CD4-positive, alpha-beta memory T cell (primary cell): ENCODE measurements at regions of chr19 and their contacts with region 1.

Region 1: DNA sequence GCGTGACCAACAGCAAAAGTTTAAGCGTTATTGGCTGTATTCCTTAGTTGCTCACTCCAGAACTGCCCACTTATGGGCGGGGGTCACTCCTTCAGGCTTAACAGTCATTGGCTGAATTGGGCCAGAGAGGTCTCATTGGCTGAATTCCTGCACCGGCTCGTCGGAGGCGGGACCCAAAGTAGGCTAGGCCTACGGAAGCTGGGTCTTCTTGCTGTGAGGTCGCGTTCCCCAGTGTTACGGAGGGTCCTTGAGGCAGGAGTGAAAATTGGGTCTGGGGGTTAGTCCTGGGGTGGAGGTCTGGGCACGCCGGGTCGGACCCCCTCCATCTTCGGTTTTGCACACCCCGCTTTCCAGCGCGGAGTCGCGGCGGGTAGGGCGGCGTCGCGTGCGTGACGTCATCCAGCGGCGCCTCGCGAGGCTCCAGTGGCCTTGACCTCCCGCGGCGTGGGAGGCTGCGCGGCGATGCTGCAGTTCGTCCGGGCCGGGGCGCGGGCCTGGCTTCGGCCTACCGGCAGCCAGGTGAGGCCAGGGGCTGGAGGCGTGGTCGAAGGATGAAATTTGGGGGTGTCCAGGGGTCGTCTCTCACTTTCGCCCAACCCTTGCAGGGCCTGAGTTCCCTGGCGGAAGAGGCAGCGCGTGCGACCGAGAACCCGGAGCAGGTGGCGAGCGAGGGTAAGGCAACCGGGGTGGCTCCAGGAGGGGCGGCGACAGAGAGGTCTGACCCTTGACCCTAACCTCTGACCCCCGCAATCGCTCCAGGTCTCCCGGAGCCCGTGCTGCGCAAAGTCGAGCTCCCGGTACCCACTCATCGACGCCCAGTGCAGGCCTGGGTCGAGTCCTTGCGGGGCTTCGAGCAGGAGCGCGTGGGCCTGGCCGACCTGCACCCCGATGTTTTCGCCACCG is at the start of gene MRPL4:
- DNase-seq: peak; percentile 97 to 99 (median 98)
- H3K4me3 ChIP-seq: peak within 1 kb of the TSS; percentile 84 to 99
- H3K4me3 Mint-ChIP-seq: peak within 1 kb of the TSS; percentile 97 to 100 (median 98)
- H3K27ac ChIP-seq: peak within 1 kb of the TSS; percentile 67
- H3K27ac Mint-ChIP-seq: peak within 1 kb of the TSS; percentile 96 to 99 (median 98)
- H3K4me1 ChIP-seq: peaks cover 25% of the 10 kb centered on the region
- H3K4me1 Mint-ChIP-seq: peaks cover 14 to 29% (median 20%) of the 10 kb centered on the region in 4 donors
- H3K27me3 ChIP-seq: no peaks in the 10 kb centered on the region
- H3K27me3 Mint-ChIP-seq: no peaks in the 10 kb centered on the region
- total RNA-seq, gene MRPL4: 42.7 to 44.6 TPM

Region 2: GRCh38 chr19:9834726-9835506 is 417.1 kb before region 1 on chr19 and contains the start of gene PIN1:
- CTCF ChIA-PET with region 1: no interaction called
- POLR2A ChIA-PET with region 1: no interaction called
- intact Hi-C with region 1: loop called (anchors 5 kb)
- DNase-seq: peak; percentile 99 to 100 (median 99)
- H3K4me3 ChIP-seq: peak within 1 kb of the TSS; percentile 55 to 97
- H3K4me3 Mint-ChIP-seq: peak within 1 kb of the TSS; percentile 93 to 97 (median 96)
- H3K27ac ChIP-seq: peak within 1 kb of the TSS; percentile 74
- H3K27ac Mint-ChIP-seq: peak within 1 kb of the TSS; percentile 91 to 99 (median 97)
- H3K4me1 ChIP-seq: peaks cover 14% of the 10 kb centered on the region
- H3K4me1 Mint-ChIP-seq: peaks cover 10 to 34% (median 19%) of the 10 kb centered on the region in 4 donors
- H3K27me3 ChIP-seq: no peaks in the 10 kb centered on the region
- H3K27me3 Mint-ChIP-seq: no peaks in the 10 kb centered on the region
- total RNA-seq, gene PIN1: 72.1 to 76.9 TPM

Region 3: GRCh38 chr19:10074153-10074552 is 177.9 kb before region 1 on chr19:
- CTCF ChIA-PET with region 1: interaction called, 17 read pairs
- POLR2A ChIA-PET with region 1: no interaction called
- intact Hi-C with region 1: loop called (anchors 1 kb)
- DNase-seq: peak; percentile 47 to 58 (median 56)
- H3K4me3 ChIP-seq: no peak overlapping the region
- H3K4me3 Mint-ChIP-seq: no peak overlapping the region
- H3K27ac ChIP-seq: no peak overlapping the region
- H3K27ac Mint-ChIP-seq: peak overlapping the region in 2 of 7 donors; percentile 25 to 52
- H3K4me1 ChIP-seq: no peaks in the 10 kb centered on the region
- H3K4me1 Mint-ChIP-seq: peaks cover 0 to 3% (median under 1%) of the 10 kb centered on the region in 4 donors
- H3K27me3 ChIP-seq: no peaks in the 10 kb centered on the region
- H3K27me3 Mint-ChIP-seq: no peaks in the 10 kb centered on the region

Region 4: DNA sequence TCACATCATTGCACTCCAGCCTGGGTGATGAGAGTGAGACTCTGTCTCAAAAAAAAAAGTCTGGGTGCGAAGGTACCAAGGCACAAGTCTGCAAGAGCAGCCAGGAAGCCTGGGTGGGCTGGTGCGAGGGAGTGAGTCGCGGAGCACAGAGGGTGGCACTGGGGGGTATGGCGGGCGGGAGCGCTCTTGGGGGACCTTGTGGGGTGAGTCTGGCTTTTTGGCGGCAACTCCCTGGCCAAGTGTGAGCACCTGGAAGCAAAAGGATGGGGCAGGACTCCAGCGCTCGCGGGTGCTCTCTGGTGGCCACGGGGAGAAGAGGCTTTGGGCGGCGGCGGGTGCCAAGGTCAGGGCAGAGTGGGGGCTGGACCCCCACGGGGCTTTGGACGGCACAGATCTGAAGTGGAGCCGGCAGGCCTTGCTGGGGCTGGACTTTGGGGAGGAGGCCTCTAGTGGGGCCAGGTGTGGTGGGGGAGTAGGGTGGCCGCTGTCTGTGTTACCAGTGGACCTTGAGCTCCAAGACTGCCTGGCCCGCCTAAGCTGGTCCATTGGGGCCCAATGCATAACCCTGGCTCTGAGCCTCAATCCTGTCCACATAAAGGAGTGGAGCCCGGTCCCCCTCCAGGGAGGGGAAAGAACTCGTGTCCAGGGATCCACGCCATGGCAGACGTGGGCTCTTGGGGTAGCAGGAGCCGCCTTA is 139.0 kb before region 1 on chr19:
- CTCF ChIA-PET with region 1: interaction called, 9 read pairs
- POLR2A ChIA-PET with region 1: interaction called, 14 read pairs
- intact Hi-C with region 1: loop called (anchors 2 kb)
- DNase-seq: peak; percentile 65 to 77 (median 68)
- H3K4me3 ChIP-seq: no peak overlapping the region
- H3K4me3 Mint-ChIP-seq: peak overlapping the region; percentile 55 to 89 (median 78)
- H3K27ac ChIP-seq: peak overlapping the region; percentile 66
- H3K27ac Mint-ChIP-seq: peak overlapping the region; percentile 91 to 97 (median 95)
- H3K4me1 ChIP-seq: peaks cover 56% of the 10 kb centered on the region
- H3K4me1 Mint-ChIP-seq: peaks cover 22 to 74% (median 31%) of the 10 kb centered on the region in 4 donors
- H3K27me3 ChIP-seq: no peaks in the 10 kb centered on the region
- H3K27me3 Mint-ChIP-seq: no peaks in the 10 kb centered on the region

Region 5: DNA sequence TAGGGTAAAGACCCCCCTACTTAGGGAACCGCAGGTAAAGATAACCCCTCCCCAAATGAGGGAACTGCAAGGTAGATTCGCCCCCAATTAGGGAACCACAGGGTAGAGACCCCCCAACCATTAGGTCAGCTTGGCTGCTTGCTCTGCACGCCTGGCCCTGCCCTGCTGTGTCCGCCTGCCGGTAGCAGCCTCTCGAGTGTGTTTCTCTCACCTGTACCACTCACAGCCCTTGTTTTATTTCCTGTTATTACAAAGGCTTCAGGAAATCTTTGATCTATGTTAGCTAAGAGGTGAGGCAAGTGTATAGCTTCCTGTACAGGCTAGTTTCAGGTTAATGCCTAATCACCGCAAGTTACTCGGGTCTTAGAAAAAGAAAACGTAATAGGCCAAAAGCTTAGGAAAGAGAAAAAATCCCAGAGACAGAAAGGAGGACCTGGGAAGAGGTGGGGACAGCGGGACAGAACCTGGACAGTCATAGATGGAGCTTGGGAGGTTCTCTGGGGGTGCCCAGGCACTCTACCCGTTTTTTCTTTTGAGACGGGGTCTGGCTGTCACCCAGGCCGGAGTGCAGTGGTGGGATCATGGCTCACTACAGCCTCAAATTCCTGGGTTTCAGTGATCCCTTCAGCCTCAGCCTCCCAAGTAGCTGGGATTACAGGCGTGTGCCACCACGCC is 109.2 kb before region 1 on chr19:
- CTCF ChIA-PET with region 1: interaction called, 22 read pairs
- POLR2A ChIA-PET with region 1: interaction called, 20 read pairs
- intact Hi-C with region 1: no loop called
- DNase-seq: peak; percentile 75 to 82 (median 77)
- H3K4me3 ChIP-seq: peak overlapping the region; percentile 34 to 44
- H3K4me3 Mint-ChIP-seq: peak overlapping the region; percentile 73 to 97 (median 87)
- H3K27ac ChIP-seq: peak overlapping the region; percentile 66
- H3K27ac Mint-ChIP-seq: peak overlapping the region; percentile 93 to 100 (median 99)
- H3K4me1 ChIP-seq: peaks cover 51% of the 10 kb centered on the region
- H3K4me1 Mint-ChIP-seq: peaks cover 18 to 52% (median 41%) of the 10 kb centered on the region in 4 donors
- H3K27me3 ChIP-seq: no peaks in the 10 kb centered on the region
- H3K27me3 Mint-ChIP-seq: no peaks in the 10 kb centered on the region

Region 6: GRCh38 chr19:10201176-10201575 is 50.9 kb before region 1 on chr19:
- CTCF ChIA-PET with region 1: interaction called, 23 read pairs
- POLR2A ChIA-PET with region 1: no interaction called
- intact Hi-C with region 1: no loop called
- DNase-seq: no peak
- H3K4me3 ChIP-seq: no peak overlapping the region
- H3K4me3 Mint-ChIP-seq: no peak overlapping the region
- H3K27ac ChIP-seq: no peak overlapping the region
- H3K27ac Mint-ChIP-seq: no peak overlapping the region
- H3K4me1 ChIP-seq: peaks cover 7% of the 10 kb centered on the region
- H3K4me1 Mint-ChIP-seq: peaks cover 7 to 15% (median 8%) of the 10 kb centered on the region in 4 donors
- H3K27me3 ChIP-seq: no peaks in the 10 kb centered on the region
- H3K27me3 Mint-ChIP-seq: no peaks in the 10 kb centered on the region

Region 7: DNA sequence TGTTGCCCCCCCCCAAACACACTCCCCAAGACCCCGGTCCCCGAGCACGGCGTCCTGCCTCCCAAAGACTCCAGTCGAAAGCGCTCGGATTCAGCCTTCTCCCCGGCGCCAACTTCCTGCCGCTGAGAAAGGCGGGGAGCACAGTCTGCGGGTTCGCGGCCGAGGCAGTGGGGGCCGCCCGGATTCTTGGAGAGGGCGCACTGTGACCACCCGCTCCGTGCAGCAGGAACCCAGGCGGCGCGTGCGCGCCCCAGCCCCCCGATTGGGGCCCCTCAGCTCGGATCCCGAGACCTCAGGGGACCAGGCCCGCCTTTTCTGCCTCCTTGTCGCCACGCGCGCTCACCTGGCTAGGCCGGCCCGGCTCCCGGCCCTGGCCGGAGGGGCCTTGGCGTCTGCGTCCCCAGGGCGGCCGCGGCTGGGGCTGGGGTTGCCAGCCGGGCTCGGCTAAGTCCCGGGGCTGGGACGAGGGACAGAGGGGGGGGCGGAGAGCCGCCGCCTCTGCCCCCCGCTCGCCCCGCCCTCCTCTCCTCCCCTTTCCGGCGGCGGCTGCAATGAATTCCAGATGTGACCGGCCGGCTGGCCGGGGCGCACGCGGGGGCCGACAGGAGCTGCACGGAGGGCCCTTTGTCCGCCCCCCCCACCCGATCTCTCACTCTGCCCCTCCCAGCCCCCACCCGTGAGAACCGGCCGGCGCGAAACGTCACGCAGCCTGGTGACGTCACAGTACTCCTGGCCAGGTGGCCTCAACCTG is 21.0 kb before region 1 on chr19 and contains the start of gene S1PR2:
- CTCF ChIA-PET with region 1: interaction called, 132 read pairs
- POLR2A ChIA-PET with region 1: interaction called, 67 read pairs
- intact Hi-C with region 1: loop called (anchors 1 kb)
- DNase-seq: peak; percentile 67 to 86 (median 75)
- H3K4me3 ChIP-seq: peak within 1 kb of the TSS; percentile 69 to 77
- H3K4me3 Mint-ChIP-seq: peak within 1 kb of the TSS; percentile 87 to 92 (median 90)
- H3K27ac ChIP-seq: peak within 1 kb of the TSS; percentile 92
- H3K27ac Mint-ChIP-seq: peak within 1 kb of the TSS; percentile 92 to 97 (median 94)
- H3K4me1 ChIP-seq: peaks cover 37% of the 10 kb centered on the region
- H3K4me1 Mint-ChIP-seq: peaks cover 20 to 52% (median 30%) of the 10 kb centered on the region in 4 donors
- H3K27me3 ChIP-seq: no peaks in the 10 kb centered on the region
- H3K27me3 Mint-ChIP-seq: no peaks in the 10 kb centered on the region
- total RNA-seq, gene S1PR2: 9.0 to 9.4 TPM